Heart left ventricle (tissue), 16 donors: ENCODE measurements at regions of chr9 and their contacts with region 1.

Region 1: GRCh38 chr9:112396416-112396815 is 16.5 kb downstream of the HSDL2 start:
- DNase-seq: no peak
- ATAC-seq: no peak
- H3K4me3 ChIP-seq: no peak overlapping the region
- H3K27ac ChIP-seq: no peak overlapping the region
- H3K4me1 ChIP-seq: peaks cover 0 to 3% (median 0%) of the 10 kb centered on the region in 12 donors
- H3K27me3 ChIP-seq: no peaks in the 10 kb centered on the region
- CTCF ChIP-seq: no peak
- POLR2A ChIP-seq: no peak

Region 2: GRCh38 chr9:112421771-112422222 is 25.4 kb after region 1 on chr9:
- intact Hi-C with region 1: loop called in 1 of 10 experiments (anchors 2 kb)
- DNase-seq: no peak
- ATAC-seq: no peak
- H3K4me3 ChIP-seq: no peak overlapping the region
- H3K27ac ChIP-seq: no peak overlapping the region
- H3K4me1 ChIP-seq: no peaks in the 10 kb centered on the region
- H3K27me3 ChIP-seq: no peaks in the 10 kb centered on the region
- CTCF ChIP-seq: no peak
- POLR2A ChIP-seq: no peak